Gastrocnemius medialis (tissue), 4 donors: ENCODE measurements at regions of chr13 and their contacts with region 1.

Region 1: GRCh38 chr13:27449936-27450828 is at the start of gene MTIF3:
- DNase-seq: peak; percentile 91 to 96
- ATAC-seq: peak; percentile 79 to 85
- H3K4me3 ChIP-seq: peak within 1 kb of the TSS; percentile 57 to 93 (median 75)
- H3K27ac ChIP-seq: peak within 1 kb of the TSS; percentile 88 to 97 (median 93)
- H3K4me1 ChIP-seq: peaks cover 33 to 47% of the 10 kb centered on the region in 2 donors
- H3K27me3 ChIP-seq: no peaks in the 10 kb centered on the region
- CTCF ChIP-seq: no peak
- POLR2A ChIP-seq: peak; percentile 60 to 78
- total RNA-seq, gene MTIF3: 73.9 to 113 (median 89.1) TPM

Region 2: DNA sequence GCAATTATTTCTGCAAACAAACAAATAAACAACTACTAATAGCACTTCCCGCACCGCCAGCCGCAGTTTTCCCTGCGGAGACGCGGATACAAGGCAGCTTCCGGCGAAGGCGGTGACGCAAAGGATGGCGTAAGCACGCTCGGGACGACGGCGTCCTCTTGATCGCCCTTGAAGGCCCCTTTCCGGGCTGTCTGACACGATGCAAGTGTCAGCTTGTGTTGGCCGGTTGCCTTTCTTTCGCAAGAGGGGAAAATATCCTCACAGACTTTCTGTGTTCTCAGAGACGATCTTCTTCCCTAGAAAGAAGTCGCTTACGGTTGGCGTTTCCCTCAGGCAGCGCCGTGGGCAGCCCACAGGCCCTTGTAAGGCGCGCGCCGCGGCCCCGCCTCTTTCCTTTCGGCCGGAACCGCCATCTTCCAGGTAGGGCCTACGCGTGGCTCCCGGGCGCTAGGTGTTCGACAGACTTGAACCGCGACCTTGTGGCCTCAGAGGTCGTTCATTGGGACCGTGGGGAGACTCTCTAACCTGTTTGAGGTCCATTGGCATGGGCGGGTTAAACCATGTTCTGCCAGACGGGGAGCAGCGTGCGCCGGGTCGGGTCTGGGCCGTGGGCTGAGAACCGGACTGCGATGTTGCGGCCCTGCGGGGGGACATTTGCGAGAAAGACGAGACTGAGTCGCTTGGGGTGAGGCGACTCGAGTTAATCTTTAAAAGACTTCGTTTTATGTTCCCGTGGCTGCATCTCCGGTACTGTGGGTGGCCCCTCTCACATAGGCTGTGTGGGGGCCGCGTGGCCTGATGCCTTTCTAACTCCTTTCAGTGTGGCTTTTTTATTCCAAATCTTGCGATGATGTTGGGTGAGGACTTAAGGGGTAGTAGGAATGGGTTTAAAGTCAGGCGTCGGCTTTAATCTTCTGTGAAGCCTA is 198.8 kb before region 1 on chr13 and contains the start of gene RPL21:
- in situ Hi-C with region 1: loop called in 2 of 4 experiments (anchors 25 kb)
- intact Hi-C with region 1: loop called (anchors 2 kb)
- DNase-seq: peak; percentile 95 to 96
- ATAC-seq: peak; percentile 99
- H3K4me3 ChIP-seq: peak within 1 kb of the TSS; percentile 83 to 99 (median 88)
- H3K27ac ChIP-seq: peak within 1 kb of the TSS; percentile 90 to 99 (median 93)
- H3K4me1 ChIP-seq: peaks cover 28 to 38% of the 10 kb centered on the region in 2 donors
- H3K27me3 ChIP-seq: no peaks in the 10 kb centered on the region
- CTCF ChIP-seq: peak in 2 of 5 experiments; percentile 12 to 20
- POLR2A ChIP-seq: peak; percentile 89 to 92
- total RNA-seq, gene RPL21: 774 to 913 (median 796) TPM

Region 3: GRCh38 chr13:27374650-27375049 is 75.5 kb before region 1 on chr13:
- in situ Hi-C with region 1: no loop called
- intact Hi-C with region 1: no loop called
- DNase-seq: peak; percentile 23 to 33
- ATAC-seq: peak; percentile 88 to 94
- H3K4me3 ChIP-seq: no peak overlapping the region
- H3K27ac ChIP-seq: no peak overlapping the region
- H3K4me1 ChIP-seq: no peaks in the 10 kb centered on the region
- H3K27me3 ChIP-seq: peaks cover 0 to 8% (median 6%) of the 10 kb centered on the region in 3 donors
- CTCF ChIP-seq: peak; percentile 35 to 76 (median 54)
- POLR2A ChIP-seq: no peak

Region 4: GRCh38 chr13:27415116-27415515 is 35.1 kb before region 1 on chr13:
- in situ Hi-C with region 1: no loop called
- intact Hi-C with region 1: loop called (anchors 5 kb)
- DNase-seq: peak; percentile 37 to 62
- ATAC-seq: peak; percentile 100
- H3K4me3 ChIP-seq: no peak overlapping the region
- H3K27ac ChIP-seq: peak overlapping the region; percentile 75 to 94 (median 86)
- H3K4me1 ChIP-seq: peaks cover 19 to 28% of the 10 kb centered on the region in 2 donors
- H3K27me3 ChIP-seq: no peaks in the 10 kb centered on the region
- CTCF ChIP-seq: no peak
- POLR2A ChIP-seq: peak; percentile 23 to 39

Region 5: DNA sequence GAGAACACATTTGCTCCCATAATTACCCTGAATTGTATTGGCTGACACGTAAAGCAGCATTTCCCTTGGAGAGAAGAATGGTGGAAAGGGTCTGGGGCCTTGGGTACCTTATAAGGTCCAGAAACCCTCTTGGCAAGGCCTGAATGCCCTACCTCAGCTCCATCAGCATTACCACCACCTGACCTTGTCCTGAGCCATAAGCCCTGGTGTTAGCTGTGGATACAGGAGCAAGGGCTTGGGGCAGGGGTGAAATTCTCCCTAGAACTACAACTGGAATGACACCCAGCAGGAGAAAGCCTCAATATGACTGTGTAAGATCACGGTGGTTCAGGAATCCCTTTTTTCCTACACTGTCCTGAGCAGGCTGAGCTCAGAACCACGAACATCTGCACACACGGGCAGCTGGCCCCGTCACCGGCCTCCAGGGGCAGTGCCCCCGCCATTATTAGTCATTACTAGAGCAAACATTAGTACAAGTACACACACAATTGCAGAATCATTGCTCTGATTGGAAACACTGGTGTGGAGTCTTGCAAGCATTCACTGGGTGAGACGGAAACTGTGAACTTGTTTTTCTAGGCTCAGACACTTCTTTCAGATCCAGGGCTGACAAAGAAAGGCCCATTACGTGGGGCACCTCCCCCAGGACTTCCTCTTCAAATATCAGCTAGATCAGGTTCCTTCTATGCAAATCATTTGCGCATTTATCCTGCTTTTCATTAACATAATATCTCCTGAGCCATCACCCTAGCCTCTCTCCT is 26.9 kb after region 1 on chr13:
- in situ Hi-C with region 1: no loop called
- intact Hi-C with region 1: no loop called
- DNase-seq: no peak
- ATAC-seq: no peak
- H3K4me3 ChIP-seq: no peak overlapping the region
- H3K27ac ChIP-seq: no peak overlapping the region
- H3K4me1 ChIP-seq: no peaks in the 10 kb centered on the region
- H3K27me3 ChIP-seq: peaks cover 0 to 6% (median 4%) of the 10 kb centered on the region in 3 donors
- CTCF ChIP-seq: no peak
- POLR2A ChIP-seq: no peak

Region 6: GRCh38 chr13:27533155-27533643 is 83.0 kb after region 1 on chr13:
- in situ Hi-C with region 1: no loop called
- intact Hi-C with region 1: loop called (anchors 5 kb)
- DNase-seq: peak; percentile 53 to 59
- ATAC-seq: peak; percentile 78 to 96
- H3K4me3 ChIP-seq: peak overlapping the region in 1 of 4 donors; percentile 32
- H3K27ac ChIP-seq: no peak overlapping the region
- H3K4me1 ChIP-seq: peaks cover 3 to 6% of the 10 kb centered on the region in 2 donors
- H3K27me3 ChIP-seq: no peaks in the 10 kb centered on the region
- CTCF ChIP-seq: peak; percentile 71 to 92 (median 86)
- POLR2A ChIP-seq: no peak

Region 7: GRCh38 chr13:28138012-28138755 is 688.0 kb after region 1 on chr13 and contains the start of gene PAN3:
- in situ Hi-C with region 1: loop called in 1 of 4 experiments (anchors 25 kb)
- intact Hi-C with region 1: loop called (anchors 5 kb)
- DNase-seq: peak; percentile 77 to 87
- ATAC-seq: peak; percentile 91
- H3K4me3 ChIP-seq: peak within 1 kb of the TSS; percentile 79 to 99 (median 88)
- H3K27ac ChIP-seq: peak within 1 kb of the TSS; percentile 93 to 99 (median 94)
- H3K4me1 ChIP-seq: peaks cover 27 to 37% of the 10 kb centered on the region in 2 donors
- H3K27me3 ChIP-seq: no peaks in the 10 kb centered on the region
- CTCF ChIP-seq: peak in 1 of 5 experiments; percentile 34
- POLR2A ChIP-seq: peak; percentile 56 to 72
- total RNA-seq, gene PAN3: 5.5 to 14.7 (median 9.4) TPM